PC-3 (cell line): ENCODE measurements at regions of chr1 and their contacts with region 1.

Region 1: GRCh38 chr1:147389532-147390524 is 147.3 kb downstream of the CHD1L start:
- DNase-seq: peak; percentile 82
- ATAC-seq: peak; percentile 94
- H3K4me3 ChIP-seq: no peak overlapping the region
- H3K27ac ChIP-seq: no peak overlapping the region
- H3K4me1 ChIP-seq: no peaks in the 10 kb centered on the region
- H3K27me3 ChIP-seq: no peaks in the 10 kb centered on the region
- CTCF ChIP-seq: peak; percentile 89

Region 2: DNA sequence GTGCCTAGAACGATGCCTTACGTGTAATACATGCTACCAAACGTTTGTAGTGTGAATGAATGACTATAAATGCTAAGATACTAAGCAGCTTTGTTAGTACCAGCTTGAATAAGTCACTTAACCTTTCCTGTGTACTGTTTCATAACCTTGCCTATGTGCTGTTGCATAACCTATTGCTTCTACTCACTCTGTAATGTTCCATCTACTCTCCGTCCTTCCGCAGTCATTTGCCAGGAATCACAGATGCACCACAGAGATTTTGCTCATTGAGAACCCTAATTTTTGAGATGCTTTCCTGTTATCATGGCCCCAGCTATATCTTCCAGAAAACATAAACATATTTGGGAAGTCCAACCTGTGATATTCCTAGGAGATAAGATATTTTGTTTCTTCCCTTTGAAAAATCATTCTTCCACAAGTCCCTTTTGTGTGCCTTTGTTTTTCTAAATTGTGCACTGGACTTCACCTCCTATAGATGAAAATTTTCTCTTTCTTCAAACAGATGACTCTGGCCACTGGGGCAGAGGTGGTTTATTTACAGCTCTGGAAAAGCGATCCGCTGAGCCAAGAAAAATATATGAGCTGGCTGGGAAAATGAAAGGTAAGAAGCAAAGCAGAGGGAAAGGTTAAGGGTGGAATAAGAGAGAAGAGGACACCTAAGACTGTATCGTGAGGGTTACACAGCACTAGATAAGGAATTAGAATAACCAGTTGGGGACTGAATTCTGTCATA is 102.5 kb before region 1 on chr1:
- CTCF ChIA-PET with region 1: no interaction called
- POLR2A ChIA-PET with region 1: no interaction called
- intact Hi-C with region 1: loop called (anchors 5 kb)
- DNase-seq: peak; percentile 37
- ATAC-seq: peak; percentile 34
- H3K4me3 ChIP-seq: no peak overlapping the region
- H3K27ac ChIP-seq: peak overlapping the region; percentile 67
- H3K4me1 ChIP-seq: peaks cover 21% of the 10 kb centered on the region
- H3K27me3 ChIP-seq: no peaks in the 10 kb centered on the region
- CTCF ChIP-seq: no peak

Region 3: GRCh38 chr1:147351140-147351835 is 38.5 kb before region 1 on chr1:
- CTCF ChIA-PET with region 1: no interaction called
- POLR2A ChIA-PET with region 1: no interaction called
- intact Hi-C with region 1: no loop called
- DNase-seq: no peak
- ATAC-seq: no peak
- H3K4me3 ChIP-seq: no peak overlapping the region
- H3K27ac ChIP-seq: no peak overlapping the region
- H3K4me1 ChIP-seq: no peaks in the 10 kb centered on the region
- H3K27me3 ChIP-seq: peaks cover 51% of the 10 kb centered on the region
- CTCF ChIP-seq: no peak

Region 4: DNA sequence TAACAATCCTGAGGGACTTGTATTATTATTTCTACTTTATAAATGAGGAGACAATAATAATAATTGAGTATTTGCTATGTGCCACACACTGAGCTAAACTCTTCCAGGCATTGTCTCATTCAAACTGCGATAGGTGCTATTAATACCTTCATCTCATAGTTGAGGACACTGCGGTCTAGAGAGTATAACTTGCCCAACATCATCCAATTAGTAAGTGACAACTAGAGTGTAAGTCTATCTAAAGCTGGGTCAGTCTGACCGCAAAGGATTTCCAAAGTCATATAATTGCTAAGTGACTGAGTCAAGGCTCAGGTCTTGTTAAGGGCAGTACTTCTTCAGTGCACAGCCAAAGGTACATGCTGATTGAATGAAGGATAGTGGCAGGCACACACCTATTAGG is 161.2 kb after region 1 on chr1:
- CTCF ChIA-PET with region 1: no interaction called
- POLR2A ChIA-PET with region 1: no interaction called
- intact Hi-C with region 1: no loop called
- DNase-seq: no peak
- ATAC-seq: no peak
- H3K4me3 ChIP-seq: no peak overlapping the region
- H3K27ac ChIP-seq: no peak overlapping the region
- H3K4me1 ChIP-seq: peaks cover 13% of the 10 kb centered on the region
- H3K27me3 ChIP-seq: no peaks in the 10 kb centered on the region
- CTCF ChIP-seq: no peak